A673 (cell line): ENCODE measurements at regions of chr5 and their contacts with region 1.

Region 1: DNA sequence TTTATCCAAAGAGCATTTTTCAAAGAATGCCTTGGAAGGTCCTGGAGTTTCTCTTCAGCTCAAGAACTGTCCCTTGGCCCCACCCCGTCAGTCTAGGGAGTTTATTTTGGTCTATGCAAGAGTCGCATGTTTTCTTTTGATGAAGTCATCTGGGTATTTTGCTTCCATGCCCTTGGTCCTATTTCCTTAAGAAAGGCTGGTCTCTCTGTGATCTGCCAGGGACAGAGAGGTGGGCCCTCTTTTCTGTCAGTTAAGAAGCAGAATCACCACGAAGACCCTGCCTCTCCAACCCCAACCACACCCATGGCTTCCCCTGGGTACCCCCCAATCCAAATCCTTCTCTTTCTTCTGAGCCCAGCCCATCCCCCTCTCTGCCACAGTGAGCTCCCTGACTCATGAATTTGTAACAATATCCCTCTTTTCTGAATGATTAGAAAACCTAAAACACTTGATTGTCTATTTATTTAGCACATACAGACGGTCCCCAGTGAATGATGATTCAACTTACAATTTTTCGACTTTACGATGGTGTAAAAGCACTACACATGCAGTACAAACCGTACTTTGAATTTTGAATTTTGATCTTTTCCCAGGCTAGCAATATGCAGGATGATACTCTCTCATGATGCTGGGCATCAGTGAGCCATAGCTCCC is 163.5 kb upstream of the ADRA1B start:
- DNase-seq: no peak
- H3K4me3 ChIP-seq: no peak overlapping the region
- H3K27ac ChIP-seq: no peak overlapping the region
- H3K4me1 ChIP-seq: no peaks in the 10 kb centered on the region
- H3K27me3 ChIP-seq: peaks cover 3% of the 10 kb centered on the region
- CTCF ChIP-seq: no peak

Region 2: GRCh38 chr5:159620853-159621540 is 131.8 kb before region 1 on chr5:
- CTCF ChIA-PET with region 1: no interaction called
- POLR2A ChIA-PET with region 1: interaction called, 10 read pairs
- intact Hi-C with region 1: no loop called
- DNase-seq: no peak
- H3K4me3 ChIP-seq: no peak overlapping the region
- H3K27ac ChIP-seq: no peak overlapping the region
- H3K4me1 ChIP-seq: no peaks in the 10 kb centered on the region
- H3K27me3 ChIP-seq: no peaks in the 10 kb centered on the region
- CTCF ChIP-seq: no peak

Region 3: DNA sequence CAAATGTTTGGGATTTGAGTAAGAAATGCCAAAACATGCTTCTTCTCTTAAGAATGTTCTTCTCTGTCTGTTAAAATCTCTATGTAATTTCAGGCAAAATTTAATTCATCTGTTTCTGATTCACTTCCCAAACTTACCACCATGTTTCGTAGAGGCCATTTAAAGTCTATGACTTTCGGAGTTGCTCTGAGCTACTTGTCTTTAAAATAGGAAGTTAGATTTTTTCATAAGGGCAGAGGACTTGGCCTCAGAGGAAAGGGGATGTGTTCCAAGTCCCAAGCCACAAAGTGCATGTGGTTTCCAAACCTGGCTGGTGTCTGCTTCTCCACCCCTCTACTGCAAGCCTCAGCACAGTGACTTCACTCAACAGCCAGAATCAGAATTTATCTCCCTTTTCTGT is 52.3 kb after region 1 on chr5:
- CTCF ChIA-PET with region 1: no interaction called
- POLR2A ChIA-PET with region 1: no interaction called
- intact Hi-C with region 1: no loop called
- DNase-seq: no peak
- H3K4me3 ChIP-seq: no peak overlapping the region
- H3K27ac ChIP-seq: no peak overlapping the region
- H3K4me1 ChIP-seq: no peaks in the 10 kb centered on the region
- H3K27me3 ChIP-seq: peaks cover 17% of the 10 kb centered on the region
- CTCF ChIP-seq: no peak